CD8-positive, alpha-beta T cell (primary cell): ENCODE measurements at regions of chr20 and their contacts with region 1.

Region 1: DNA sequence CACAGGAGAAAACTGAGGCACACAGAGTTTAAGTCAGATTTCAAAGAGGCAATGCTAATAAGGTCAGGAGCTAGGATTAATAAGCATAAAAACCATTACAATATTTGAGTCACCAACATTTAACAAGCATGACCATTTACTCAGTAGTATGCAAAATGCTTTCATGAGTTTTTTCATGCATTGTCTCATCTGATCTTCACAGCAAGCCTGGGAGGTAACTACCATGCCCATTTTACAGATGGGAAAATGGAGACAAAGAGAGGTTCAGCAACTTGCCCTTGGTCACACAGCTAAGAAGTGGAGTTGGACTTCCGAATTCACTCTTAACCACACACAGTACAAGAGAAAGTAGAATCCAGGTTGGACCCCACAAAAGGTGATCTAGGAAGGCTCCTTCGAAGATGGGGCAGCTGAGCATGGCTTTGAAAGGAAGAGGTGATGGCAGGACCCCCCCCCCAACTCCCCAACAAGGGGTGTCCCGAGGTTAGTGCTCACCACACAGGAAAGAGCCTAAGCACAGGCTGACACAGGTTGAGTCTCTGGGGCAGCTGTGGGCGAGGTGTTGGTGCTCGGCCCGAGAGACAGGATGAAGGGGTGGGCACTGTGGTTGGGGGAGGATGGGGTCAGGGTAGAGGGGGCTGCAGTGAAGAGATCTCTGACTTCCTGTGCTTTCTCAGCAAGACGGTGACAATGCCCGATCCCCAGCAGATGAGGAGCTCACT is 108.8 kb downstream of the PREX1 start:
- DNase-seq: peak in 8 of 9 experiments; percentile 31 to 77 (median 60)
- ATAC-seq: peak; percentile 46
- H3K4me3 ChIP-seq: no peak overlapping the region
- H3K4me3 Mint-ChIP-seq: peak overlapping the region; percentile 66
- H3K27ac ChIP-seq: peak overlapping the region in 1 of 2 experiments; percentile 60
- H3K27ac Mint-ChIP-seq: peak overlapping the region; percentile 92
- H3K4me1 ChIP-seq: peaks cover 98% of the 10 kb centered on the region
- H3K4me1 Mint-ChIP-seq: peaks cover 95% of the 10 kb centered on the region
- H3K27me3 ChIP-seq: no peaks in the 10 kb centered on the region
- H3K27me3 Mint-ChIP-seq: no peaks in the 10 kb centered on the region
- CTCF ChIP-seq: no peak

Region 2: DNA sequence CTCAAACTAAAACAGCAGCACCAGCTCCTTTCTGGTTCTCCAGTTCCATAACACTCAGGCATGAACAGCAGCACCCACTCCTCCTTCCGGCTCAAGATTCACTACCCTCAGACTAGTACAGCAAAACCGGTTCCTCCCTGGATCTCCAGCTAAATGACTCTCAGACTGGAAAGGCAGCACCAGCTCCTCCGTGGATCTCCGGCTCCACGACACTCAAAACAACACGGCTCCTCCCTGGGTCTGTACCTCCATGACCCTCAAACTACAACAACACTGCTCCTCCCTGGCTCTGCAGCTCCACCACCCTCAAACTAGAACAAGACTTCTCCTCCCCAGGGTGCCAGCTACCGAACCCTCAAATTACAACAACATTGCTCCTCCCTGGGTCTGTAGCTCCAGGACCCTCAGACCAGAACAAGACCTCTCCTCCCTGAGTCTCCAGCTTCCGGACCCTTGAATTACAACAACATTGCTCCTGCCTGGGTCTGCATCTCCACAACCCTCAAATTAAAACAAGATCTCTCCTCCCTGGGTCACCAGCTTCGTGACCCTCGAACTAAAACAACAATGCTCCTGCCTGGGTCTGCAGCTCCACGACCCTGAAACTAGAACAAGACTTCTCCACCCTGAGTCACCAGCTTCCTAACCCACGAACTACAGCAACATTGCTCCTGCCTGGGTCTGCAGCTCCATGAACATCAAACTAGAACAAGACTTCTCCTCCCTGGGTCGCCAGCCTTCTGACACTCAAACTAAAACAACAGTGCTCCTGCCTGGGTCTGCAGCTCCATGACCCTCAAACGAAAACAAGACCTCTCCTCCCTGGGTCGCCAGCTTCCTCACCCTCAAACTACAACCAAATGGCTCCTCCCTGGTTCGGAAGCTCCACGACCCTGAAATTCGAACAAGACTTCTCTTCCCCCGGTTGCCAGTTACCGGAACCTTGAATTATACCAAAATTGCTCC is 215.9 kb before region 1 on chr20:
- CTCF ChIA-PET with region 1: no interaction called
- POLR2A ChIA-PET with region 1: no interaction called
- intact Hi-C with region 1: no loop called
- DNase-seq: no peak
- ATAC-seq: no peak
- H3K4me3 ChIP-seq: no peak overlapping the region
- H3K4me3 Mint-ChIP-seq: no peak overlapping the region
- H3K27ac ChIP-seq: no peak overlapping the region
- H3K27ac Mint-ChIP-seq: no peak overlapping the region
- H3K4me1 ChIP-seq: no peaks in the 10 kb centered on the region
- H3K4me1 Mint-ChIP-seq: no peaks in the 10 kb centered on the region
- H3K27me3 ChIP-seq: no peaks in the 10 kb centered on the region
- H3K27me3 Mint-ChIP-seq: no peaks in the 10 kb centered on the region
- CTCF ChIP-seq: no peak

Region 3: DNA sequence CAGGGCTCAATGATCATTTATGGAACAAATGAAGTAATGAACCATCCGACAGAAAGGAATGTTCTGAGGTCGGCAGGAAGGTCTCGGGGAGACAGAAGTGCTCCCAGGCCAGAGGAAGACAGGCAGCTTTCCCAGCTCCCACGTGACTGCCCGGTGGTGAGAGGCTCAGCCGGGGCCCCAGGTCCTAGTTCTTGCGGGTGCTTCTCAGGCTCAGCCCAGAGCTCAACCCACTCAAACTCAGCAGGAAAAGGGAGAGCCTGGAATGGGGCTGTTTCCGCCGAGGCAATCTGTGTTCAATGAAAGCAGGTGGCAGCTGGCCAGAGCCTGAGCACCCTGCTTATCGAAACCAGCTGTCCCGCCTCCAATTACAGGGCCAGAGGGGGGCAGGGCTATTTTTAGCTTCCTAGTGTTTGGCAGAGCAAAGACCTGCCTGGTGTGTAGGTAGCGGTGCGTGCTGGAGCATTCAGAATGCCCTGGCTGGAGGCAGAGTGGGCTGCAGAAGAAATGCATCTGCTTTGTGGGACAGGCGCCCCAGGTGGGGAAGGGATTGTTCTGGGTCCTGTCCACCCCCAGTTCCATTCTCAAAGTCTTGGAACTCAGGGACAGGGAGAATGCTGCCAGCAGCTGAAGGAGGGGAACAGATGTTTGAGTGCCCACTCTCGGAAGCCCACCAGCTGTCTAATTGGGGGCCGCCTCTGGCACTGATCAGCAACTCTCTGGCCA is 36.3 kb before region 1 on chr20:
- CTCF ChIA-PET with region 1: no interaction called
- POLR2A ChIA-PET with region 1: no interaction called
- intact Hi-C with region 1: loop called in 1 of 2 experiments (anchors 1 kb)
- DNase-seq: no peak
- ATAC-seq: no peak
- H3K4me3 ChIP-seq: no peak overlapping the region
- H3K4me3 Mint-ChIP-seq: no peak overlapping the region
- H3K27ac ChIP-seq: no peak overlapping the region
- H3K27ac Mint-ChIP-seq: peak overlapping the region; percentile 13
- H3K4me1 ChIP-seq: no peaks in the 10 kb centered on the region
- H3K4me1 Mint-ChIP-seq: peaks cover 1% of the 10 kb centered on the region
- H3K27me3 ChIP-seq: no peaks in the 10 kb centered on the region
- H3K27me3 Mint-ChIP-seq: no peaks in the 10 kb centered on the region
- CTCF ChIP-seq: no peak

Region 4: GRCh38 chr20:48760403-48760983 is 41.5 kb after region 1 on chr20:
- CTCF ChIA-PET with region 1: no interaction called
- POLR2A ChIA-PET with region 1: no interaction called
- intact Hi-C with region 1: loop called (anchors 1 to 2 kb)
- DNase-seq: peak; percentile 34 to 95 (median 82)
- ATAC-seq: peak; percentile 69
- H3K4me3 ChIP-seq: peak overlapping the region; percentile 36 to 51
- H3K4me3 Mint-ChIP-seq: peak overlapping the region; percentile 76
- H3K27ac ChIP-seq: peak overlapping the region; percentile 87 to 93
- H3K27ac Mint-ChIP-seq: peak overlapping the region; percentile 99
- H3K4me1 ChIP-seq: peaks cover 78% of the 10 kb centered on the region
- H3K4me1 Mint-ChIP-seq: peaks cover 86% of the 10 kb centered on the region
- H3K27me3 ChIP-seq: no peaks in the 10 kb centered on the region
- H3K27me3 Mint-ChIP-seq: no peaks in the 10 kb centered on the region
- CTCF ChIP-seq: no peak

Region 5: GRCh38 chr20:48791015-48791514 is 72.0 kb after region 1 on chr20:
- CTCF ChIA-PET with region 1: no interaction called
- POLR2A ChIA-PET with region 1: no interaction called
- intact Hi-C with region 1: no loop called
- DNase-seq: peak in 4 of 9 experiments; percentile 23 to 50 (median 40)
- ATAC-seq: peak; percentile 66
- H3K4me3 ChIP-seq: no peak overlapping the region
- H3K4me3 Mint-ChIP-seq: peak overlapping the region; percentile 26
- H3K27ac ChIP-seq: no peak overlapping the region
- H3K27ac Mint-ChIP-seq: peak overlapping the region; percentile 19
- H3K4me1 ChIP-seq: peaks cover 65% of the 10 kb centered on the region
- H3K4me1 Mint-ChIP-seq: peaks cover 87% of the 10 kb centered on the region
- H3K27me3 ChIP-seq: no peaks in the 10 kb centered on the region
- H3K27me3 Mint-ChIP-seq: no peaks in the 10 kb centered on the region
- CTCF ChIP-seq: peak; percentile 43